PC-9 (cell line): ENCODE measurements at regions of chrX and their contacts with region 1.

Region 1: DNA sequence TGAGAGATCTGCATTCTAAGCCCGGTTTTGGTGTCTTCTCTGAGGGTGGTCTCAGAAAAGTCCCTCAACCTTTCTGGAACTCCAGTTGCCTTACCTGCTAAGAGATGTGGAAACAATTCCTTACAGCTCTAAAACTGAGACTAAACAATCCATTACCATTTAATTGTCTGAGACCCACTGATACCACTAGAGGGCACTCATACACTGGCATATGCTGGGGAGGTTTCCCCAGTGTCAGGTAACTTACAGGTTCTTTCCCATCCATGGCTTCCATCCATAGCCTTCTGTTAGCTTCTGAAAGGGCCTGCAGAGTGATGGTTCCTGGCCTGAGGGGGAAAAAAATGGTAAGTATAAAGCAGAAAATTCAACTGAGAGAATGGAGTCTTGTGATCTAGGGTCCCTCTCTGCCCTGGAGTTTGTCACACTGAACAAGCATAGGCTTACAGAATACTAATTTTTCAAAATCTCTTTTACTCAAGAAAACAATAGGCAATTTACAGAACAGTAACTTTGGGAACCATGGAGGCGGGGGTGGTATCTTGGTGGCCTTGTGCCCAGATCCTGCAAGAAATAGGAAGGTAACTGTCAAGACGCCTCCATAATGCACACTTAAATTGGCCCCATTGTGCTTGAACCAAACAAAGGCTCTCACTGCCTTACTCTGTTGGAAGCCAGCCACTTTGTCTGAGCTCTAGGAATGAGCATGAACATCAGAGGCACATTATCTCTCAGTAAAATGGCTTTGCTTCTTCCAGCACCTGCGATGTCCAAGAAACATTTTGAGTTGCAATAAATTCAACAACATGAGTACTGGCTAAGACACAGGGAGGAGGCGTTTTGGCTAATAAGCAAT is 236.1 kb downstream of the OPHN1 start:
- DNase-seq: peak; percentile 39 to 54
- H3K4me3 ChIP-seq: no peak overlapping the region
- H3K27ac ChIP-seq: no peak overlapping the region
- H3K4me1 ChIP-seq: peaks cover 8% of the 10 kb centered on the region; the same call in 1 of the 2 replicates
- H3K27me3 ChIP-seq: no peaks in the 10 kb centered on the region
- CTCF ChIP-seq: peak; percentile 82

Region 2: DNA sequence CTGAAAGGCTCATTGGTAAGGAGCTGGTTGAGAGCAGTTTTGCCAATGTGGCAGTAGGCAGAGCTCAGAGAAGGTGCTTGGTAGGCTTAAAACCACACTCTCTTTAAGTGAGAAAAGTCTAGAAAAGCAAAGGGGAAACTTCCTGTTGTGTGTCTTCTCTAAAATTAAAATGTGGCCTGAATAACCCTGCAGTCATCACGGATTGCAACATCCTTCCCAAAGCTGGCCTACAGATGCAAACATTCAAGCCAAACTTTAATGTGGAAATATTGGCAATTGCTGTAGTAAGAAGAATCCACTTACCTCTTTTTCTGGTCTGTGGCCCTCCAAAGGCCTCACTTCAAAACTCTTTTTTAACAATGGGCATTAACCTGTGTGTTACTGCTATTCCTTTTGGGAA is 112.4 kb before region 1 on chrX:
- CTCF ChIA-PET with region 1: no interaction called
- POLR2A ChIA-PET with region 1: no interaction called
- intact Hi-C with region 1: no loop called
- DNase-seq: no peak
- H3K4me3 ChIP-seq: no peak overlapping the region
- H3K27ac ChIP-seq: no peak overlapping the region
- H3K4me1 ChIP-seq: no peaks in the 10 kb centered on the region
- H3K27me3 ChIP-seq: no peaks in the 10 kb centered on the region
- CTCF ChIP-seq: no peak

Region 3: DNA sequence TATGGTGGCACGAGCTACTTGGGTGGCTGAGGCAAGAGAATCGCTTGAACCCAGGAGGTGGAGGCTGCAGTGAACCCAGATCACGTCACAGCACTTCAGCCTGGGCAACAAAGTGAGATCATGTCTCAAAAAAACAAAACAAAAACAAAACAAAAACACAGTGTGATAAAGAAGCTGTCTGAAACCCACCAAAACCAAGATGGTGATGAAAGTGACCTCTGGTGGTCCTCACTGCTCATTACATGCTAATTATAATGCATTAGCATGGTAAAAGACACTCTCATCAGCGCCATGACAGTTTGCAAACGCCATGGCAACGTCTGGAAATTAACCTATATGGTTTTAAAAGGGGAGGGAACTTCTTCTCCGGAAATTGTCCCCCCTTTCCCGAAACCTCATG is 265.5 kb after region 1 on chrX:
- CTCF ChIA-PET with region 1: interaction called, 5 read pairs
- POLR2A ChIA-PET with region 1: no interaction called
- intact Hi-C with region 1: loop called (anchors 2 kb)
- DNase-seq: no peak
- H3K4me3 ChIP-seq: no peak overlapping the region
- H3K27ac ChIP-seq: no peak overlapping the region
- H3K4me1 ChIP-seq: no peaks in the 10 kb centered on the region
- H3K27me3 ChIP-seq: no peaks in the 10 kb centered on the region
- CTCF ChIP-seq: peak; percentile 67

Region 4: DNA sequence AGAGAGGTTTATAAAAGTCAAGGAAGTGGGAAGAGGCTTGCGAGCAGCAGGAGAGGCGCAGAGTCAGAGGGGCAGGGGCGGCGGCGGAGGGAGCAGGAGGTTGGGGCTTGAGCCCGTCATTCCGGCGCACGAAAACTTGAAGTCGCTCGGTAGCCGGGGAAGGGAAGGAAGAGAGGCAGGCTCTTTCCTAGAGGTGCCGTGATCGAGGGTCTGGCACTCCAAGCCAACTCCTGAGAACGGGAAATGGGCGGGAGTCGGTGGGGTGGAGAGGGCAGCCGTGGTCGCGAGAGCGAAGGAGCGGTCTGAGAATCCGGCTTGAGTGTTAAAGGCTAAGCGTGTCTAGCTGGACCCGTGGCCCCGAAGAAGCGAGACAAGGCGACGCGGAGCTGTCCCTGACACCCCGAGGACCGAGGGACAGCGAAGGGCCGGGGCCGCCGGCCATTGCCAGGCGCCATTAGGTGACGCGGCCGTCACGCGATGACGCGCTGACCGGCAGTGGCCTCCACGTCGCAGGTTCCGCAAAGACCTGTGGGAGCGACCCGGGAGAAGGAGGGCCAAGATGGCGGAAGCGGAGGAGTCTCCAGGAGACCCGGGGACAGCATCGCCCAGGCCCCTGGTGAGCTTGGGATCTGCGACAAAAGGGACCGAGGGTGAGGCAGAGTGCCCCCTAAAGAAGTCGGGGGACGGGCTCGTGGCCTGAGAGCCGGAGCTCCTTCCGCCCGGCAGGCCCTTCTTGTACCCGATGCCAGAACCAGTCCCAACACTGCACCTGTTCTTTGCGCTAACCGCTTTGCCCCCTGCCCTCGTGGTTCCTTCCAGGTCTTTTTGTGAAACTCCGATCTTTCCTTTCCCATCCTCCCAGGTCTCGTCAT is 301.6 kb after region 1 on chrX and contains the start of gene YIPF6:
- CTCF ChIA-PET with region 1: no interaction called
- POLR2A ChIA-PET with region 1: no interaction called
- intact Hi-C with region 1: loop called (anchors 5 kb)
- DNase-seq: peak; percentile 61 to 69
- H3K4me3 ChIP-seq: peak within 1 kb of the TSS; percentile 98
- H3K27ac ChIP-seq: peak within 1 kb of the TSS; percentile 87
- H3K4me1 ChIP-seq: peaks cover 15% of the 10 kb centered on the region; the same call in 1 of the 2 replicates
- H3K27me3 ChIP-seq: no peaks in the 10 kb centered on the region
- CTCF ChIP-seq: no peak; the same call in 1 of the 2 replicates
- total RNA-seq, gene YIPF6: 46.1 and 49.1 TPM in 2 replicates

Region 5: GRCh38 chrX:68710870-68711576 is 513.9 kb after region 1 on chrX:
- CTCF ChIA-PET with region 1: interaction called, 9 read pairs
- POLR2A ChIA-PET with region 1: no interaction called
- intact Hi-C with region 1: loop called (anchors 1 kb)
- DNase-seq: peak; percentile 50 to 52
- H3K4me3 ChIP-seq: no peak overlapping the region
- H3K27ac ChIP-seq: no peak overlapping the region
- H3K4me1 ChIP-seq: no peaks in the 10 kb centered on the region
- H3K27me3 ChIP-seq: no peaks in the 10 kb centered on the region
- CTCF ChIP-seq: peak; percentile 80

Region 6: GRCh38 chrX:68807818-68808217 is 610.7 kb after region 1 on chrX:
- CTCF ChIA-PET with region 1: no interaction called
- POLR2A ChIA-PET with region 1: no interaction called
- intact Hi-C with region 1: loop called (anchors 5 kb)
- DNase-seq: peak in 1 of 2 experiments; percentile 7
- H3K4me3 ChIP-seq: no peak overlapping the region
- H3K27ac ChIP-seq: no peak overlapping the region
- H3K4me1 ChIP-seq: no peaks in the 10 kb centered on the region
- H3K27me3 ChIP-seq: no peaks in the 10 kb centered on the region
- CTCF ChIP-seq: peak; percentile 31; the same call in 1 of the 2 replicates